Activated naive CD4-positive, alpha-beta T cell treated with anti-CD3 and anti-CD28 coated beads for 36 hours (primary cell): ENCODE measurements at regions of chr17 and their contacts with region 1.

Region 1: DNA sequence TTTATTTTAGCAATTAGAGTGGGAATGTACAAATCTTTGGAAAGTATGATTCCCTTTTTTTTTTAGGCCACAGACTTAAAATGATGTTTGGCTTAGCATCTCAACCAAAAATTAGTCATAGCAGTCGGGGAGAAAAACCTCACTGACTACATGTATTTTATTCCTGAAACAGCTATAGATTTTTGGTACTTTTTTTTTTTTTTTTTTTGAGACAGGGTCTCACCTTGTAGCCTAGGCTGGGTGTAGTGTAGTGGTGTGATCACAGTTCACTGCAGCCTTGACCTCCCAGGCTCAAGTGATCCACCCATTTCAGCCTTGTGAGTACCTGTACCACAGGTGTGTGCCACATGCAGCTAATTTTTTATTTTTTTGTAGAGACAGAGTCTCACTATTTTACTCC is 23.4 kb downstream of the RNFT1 start:
- DNase-seq: peak; percentile 38
- H3K4me3 Mint-ChIP-seq: peak overlapping the region; percentile 39
- H3K27ac Mint-ChIP-seq: peak overlapping the region; percentile 98
- H3K4me1 Mint-ChIP-seq: peaks cover 59% of the 10 kb centered on the region
- H3K27me3 Mint-ChIP-seq: no peaks in the 10 kb centered on the region

Region 2: GRCh38 chr17:59565171-59565969 is 375.8 kb before region 1 on chr17 and contains the start of gene DHX40:
- CTCF ChIA-PET with region 1: no interaction called
- intact Hi-C with region 1: loop called (anchors 2 kb)
- DNase-seq: peak; percentile 98
- H3K4me3 Mint-ChIP-seq: peak within 1 kb of the TSS; percentile 100
- H3K27ac Mint-ChIP-seq: peak within 1 kb of the TSS; percentile 98
- H3K4me1 Mint-ChIP-seq: peaks cover 21% of the 10 kb centered on the region
- H3K27me3 Mint-ChIP-seq: no peaks in the 10 kb centered on the region
- total RNA-seq, gene DHX40: 14.2 to 15.3 TPM

Region 3: GRCh38 chr17:59846394-59847165 is 94.6 kb before region 1 on chr17:
- CTCF ChIA-PET with region 1: no interaction called
- intact Hi-C with region 1: loop called (anchors 2 kb)
- DNase-seq: peak; percentile 53
- H3K4me3 Mint-ChIP-seq: peak overlapping the region; percentile 28
- H3K27ac Mint-ChIP-seq: peak overlapping the region; percentile 100
- H3K4me1 Mint-ChIP-seq: peaks cover 76% of the 10 kb centered on the region
- H3K27me3 Mint-ChIP-seq: no peaks in the 10 kb centered on the region

Region 4: GRCh38 chr17:59899103-59899502 is 42.0 kb before region 1 on chr17:
- CTCF ChIA-PET with region 1: no interaction called
- intact Hi-C with region 1: no loop called
- DNase-seq: no peak
- H3K4me3 Mint-ChIP-seq: no peak overlapping the region
- H3K27ac Mint-ChIP-seq: no peak overlapping the region
- H3K4me1 Mint-ChIP-seq: peaks cover 49% of the 10 kb centered on the region
- H3K27me3 Mint-ChIP-seq: no peaks in the 10 kb centered on the region

Region 5: DNA sequence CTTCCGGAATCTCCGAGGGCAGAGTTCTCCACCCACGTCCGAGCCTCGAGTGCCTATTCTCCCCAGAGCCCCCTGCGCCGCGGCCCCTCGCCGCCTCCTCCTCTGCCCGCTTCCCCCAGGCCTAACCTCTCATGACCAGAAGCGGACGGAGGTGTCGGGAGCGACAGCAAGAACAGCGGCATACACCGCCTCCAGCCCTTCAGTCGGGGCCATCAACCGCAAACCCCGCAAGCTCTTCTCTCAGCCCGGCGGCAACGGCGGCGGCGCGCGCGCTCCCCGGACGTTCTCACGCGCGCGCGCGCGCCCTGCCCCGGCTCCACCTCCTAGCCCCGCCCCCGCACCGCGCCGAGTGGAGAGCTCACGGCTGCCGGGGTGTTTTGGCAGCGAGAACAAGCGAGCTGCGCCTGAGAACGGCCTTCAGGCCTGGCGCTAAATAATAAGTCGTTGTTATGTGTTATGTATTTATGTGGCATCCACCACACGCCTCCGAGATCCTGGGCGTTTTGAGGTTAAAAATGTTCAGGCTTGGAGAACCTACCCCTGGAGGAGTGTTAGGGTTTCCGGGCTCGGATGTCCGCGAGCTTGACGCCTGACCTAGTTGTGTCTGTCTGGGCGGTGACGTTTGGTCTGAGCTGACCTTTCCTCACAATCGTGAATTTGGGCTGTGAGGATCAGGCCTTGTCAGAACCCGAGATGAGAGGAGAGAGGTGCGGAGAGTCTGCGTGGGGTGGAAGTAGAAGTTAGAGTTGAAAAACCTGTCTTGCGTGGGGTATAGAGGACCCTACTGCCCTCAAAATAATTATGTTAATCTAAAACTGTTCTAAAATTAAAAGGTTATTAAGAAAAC is 23.6 kb after region 1 on chr17 and contains the start of gene RNFT1:
- CTCF ChIA-PET with region 1: interaction called, 7 read pairs
- intact Hi-C with region 1: loop called (anchors 1 kb)
- DNase-seq: peak; percentile 94
- H3K4me3 Mint-ChIP-seq: peak within 1 kb of the TSS; percentile 91
- H3K27ac Mint-ChIP-seq: peak within 1 kb of the TSS; percentile 95
- H3K4me1 Mint-ChIP-seq: peaks cover 22% of the 10 kb centered on the region
- H3K27me3 Mint-ChIP-seq: no peaks in the 10 kb centered on the region
- total RNA-seq, gene RNFT1: 29.1 to 31.1 TPM

Region 6: DNA sequence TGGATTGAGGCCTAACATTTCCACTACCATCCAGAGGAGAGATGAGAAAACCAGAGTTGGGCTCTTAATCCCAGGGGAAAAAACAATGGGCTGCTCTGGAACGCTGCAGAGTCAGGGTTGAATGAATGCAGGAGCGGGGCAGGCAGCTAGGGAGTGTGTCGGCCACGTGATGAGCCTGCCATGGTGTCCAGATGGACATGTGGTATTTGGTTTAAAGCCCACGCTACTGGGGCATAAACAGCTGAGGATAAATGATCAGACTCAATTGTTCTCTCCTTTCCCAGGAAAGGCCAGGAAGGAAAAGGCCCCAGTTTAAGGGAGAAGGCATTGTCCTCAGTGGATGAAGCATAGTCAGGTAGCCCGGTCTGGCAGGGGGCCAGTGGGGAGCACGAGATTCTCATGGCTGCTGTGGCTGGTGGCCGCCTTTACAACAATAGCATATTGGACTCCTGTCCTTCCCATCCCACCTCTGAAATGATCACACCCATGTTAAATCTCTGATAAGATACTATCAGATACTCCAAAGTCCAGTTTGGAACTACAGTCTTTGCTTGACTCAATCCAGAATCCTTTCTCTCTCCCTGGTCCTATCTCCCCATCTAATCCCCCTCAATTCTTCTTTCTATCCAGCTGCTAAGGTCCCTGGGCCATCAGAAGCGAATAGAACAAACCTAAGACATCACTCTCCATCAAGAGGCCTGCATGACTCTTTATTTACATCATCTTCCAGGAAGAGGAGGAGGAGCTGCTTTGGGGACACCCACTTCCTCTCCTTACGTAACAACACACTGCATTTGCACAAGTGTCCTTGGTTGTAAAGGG is 229.0 kb after region 1 on chr17:
- CTCF ChIA-PET with region 1: no interaction called
- intact Hi-C with region 1: no loop called
- DNase-seq: peak; percentile 63
- H3K4me3 Mint-ChIP-seq: peak overlapping the region; percentile 40
- H3K27ac Mint-ChIP-seq: peak overlapping the region; percentile 80
- H3K4me1 Mint-ChIP-seq: peaks cover 34% of the 10 kb centered on the region
- H3K27me3 Mint-ChIP-seq: peaks cover 3% of the 10 kb centered on the region